Motor neuron (in vitro differentiated cells): ENCODE measurements at regions of chr20 and their contacts with region 1.

Region 1: DNA sequence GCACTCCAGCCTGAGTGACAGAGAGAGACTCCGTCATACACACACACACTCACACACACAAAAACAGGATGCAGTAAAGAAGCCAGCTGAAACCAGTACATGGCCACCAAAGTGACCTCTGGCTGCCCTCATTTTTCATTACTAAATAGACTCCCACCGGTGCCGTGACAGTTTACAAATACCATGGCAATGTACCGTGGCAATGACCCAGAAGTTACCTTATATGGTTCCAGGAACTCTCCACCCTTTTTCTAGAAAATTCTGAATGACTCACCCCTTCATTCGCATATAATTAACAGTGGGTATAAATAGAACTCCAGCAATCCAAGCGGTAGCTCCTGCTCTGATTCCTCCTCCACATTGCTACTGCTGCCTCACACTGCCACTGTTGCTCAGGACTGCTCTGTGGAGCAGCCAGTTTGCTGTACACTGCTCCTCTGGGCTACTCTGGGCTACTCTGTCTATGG is 57.7 kb downstream of the SNX5 start:
- ATAC-seq: peak; percentile 84 to 96 (median 92)
- H3K4me3 ChIP-seq: no peak overlapping the region
- H3K27ac ChIP-seq: peak overlapping the region; percentile 4 to 79
- H3K4me1 ChIP-seq: peaks cover 13 to 25% of the 10 kb centered on the region in 2 donors

Region 2: DNA sequence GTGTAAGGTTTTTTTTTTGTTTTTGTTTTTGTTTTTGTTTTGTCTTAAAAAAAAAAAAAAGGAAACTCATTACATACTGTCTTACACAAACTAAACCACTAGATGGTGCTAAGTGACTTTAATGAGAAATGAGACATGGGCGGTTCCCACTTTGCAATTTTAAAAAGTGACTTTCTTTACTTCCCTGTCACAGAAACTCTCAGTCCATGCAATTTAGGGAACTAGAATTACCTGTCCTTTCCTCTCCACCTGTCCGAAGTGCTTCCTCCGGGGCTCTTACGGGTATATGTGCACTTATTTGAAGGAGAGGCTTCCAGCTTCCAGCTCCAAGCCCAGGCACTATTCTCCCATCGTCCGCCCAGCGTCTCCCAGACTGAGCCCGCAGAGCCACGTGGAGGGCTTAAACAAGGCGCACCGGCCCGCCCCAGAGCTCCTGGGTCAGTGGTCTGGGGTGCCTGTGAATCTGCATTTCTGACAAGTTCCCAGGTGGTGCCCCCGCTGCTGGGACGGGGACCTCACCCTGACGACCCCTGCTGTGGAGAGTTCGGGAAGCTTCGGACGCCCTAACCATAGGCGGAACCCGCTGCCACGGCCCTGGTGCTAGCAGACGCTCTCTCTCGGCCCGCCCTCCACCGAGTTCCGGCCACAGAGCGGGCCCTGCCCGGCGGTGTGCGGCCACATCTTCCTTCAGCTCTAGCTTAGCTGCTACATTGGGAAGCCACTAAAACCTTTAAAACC is 405.8 kb before region 1 on chr20:
- in situ Hi-C with region 1: loop called in 1 of 9 experiments (anchors 25 kb)
- ATAC-seq: peak; percentile 73 to 94 (median 82)
- H3K4me3 ChIP-seq: peak overlapping the region in 4 of 5 donors; percentile 10 to 31 (median 16)
- H3K27ac ChIP-seq: no peak overlapping the region
- H3K4me1 ChIP-seq: peaks cover 0 to 5% of the 10 kb centered on the region in 2 donors

Region 3: GRCh38 chr20:17654649-17655285 is 256.1 kb before region 1 on chr20:
- in situ Hi-C with region 1: loop called in 1 of 9 experiments (anchors 25 kb)
- ATAC-seq: no peak
- H3K4me3 ChIP-seq: no peak overlapping the region
- H3K27ac ChIP-seq: no peak overlapping the region
- H3K4me1 ChIP-seq: no peaks in the 10 kb centered on the region

Region 4: GRCh38 chr20:17682103-17682888 is 228.6 kb before region 1 on chr20 and contains the start of gene RRBP1:
- in situ Hi-C with region 1: loop called in 1 of 9 experiments (anchors 25 kb)
- ATAC-seq: peak; percentile 80 to 97 (median 96)
- H3K4me3 ChIP-seq: peak within 1 kb of the TSS; percentile 61 to 92 (median 77)
- H3K27ac ChIP-seq: peak within 1 kb of the TSS; percentile 69 to 81
- H3K4me1 ChIP-seq: peaks cover 6% of the 10 kb centered on the region in 2 donors
- total RNA-seq, gene RRBP1: 12.2 to 94.0 (median 31.2) TPM

Region 5: DNA sequence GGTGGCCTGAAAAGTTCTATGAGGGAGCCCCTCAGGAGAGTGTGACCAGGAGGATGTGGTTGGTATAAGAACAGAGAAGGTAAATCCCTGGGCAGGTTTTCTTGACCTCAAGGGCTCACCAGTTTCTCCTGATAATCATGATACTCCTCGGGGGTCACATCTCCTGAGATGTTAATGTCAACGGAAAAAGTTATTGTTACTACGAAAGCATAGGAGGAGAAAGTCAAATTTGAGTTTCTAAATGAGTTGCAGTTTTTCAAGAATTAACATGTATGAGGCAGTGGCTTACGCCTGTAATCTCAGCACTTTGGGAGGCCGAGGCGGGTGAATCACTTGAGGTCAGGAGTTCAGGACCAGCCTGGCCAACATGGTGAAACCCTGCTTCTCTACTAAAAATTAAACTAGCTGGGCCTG is 81.4 kb after region 1 on chr20:
- in situ Hi-C with region 1: no loop called
- ATAC-seq: no peak
- H3K4me3 ChIP-seq: no peak overlapping the region
- H3K27ac ChIP-seq: no peak overlapping the region
- H3K4me1 ChIP-seq: no peaks in the 10 kb centered on the region